ENCODE measurements at regions of chr9 and their contacts with region 1.

Region 1: DNA sequence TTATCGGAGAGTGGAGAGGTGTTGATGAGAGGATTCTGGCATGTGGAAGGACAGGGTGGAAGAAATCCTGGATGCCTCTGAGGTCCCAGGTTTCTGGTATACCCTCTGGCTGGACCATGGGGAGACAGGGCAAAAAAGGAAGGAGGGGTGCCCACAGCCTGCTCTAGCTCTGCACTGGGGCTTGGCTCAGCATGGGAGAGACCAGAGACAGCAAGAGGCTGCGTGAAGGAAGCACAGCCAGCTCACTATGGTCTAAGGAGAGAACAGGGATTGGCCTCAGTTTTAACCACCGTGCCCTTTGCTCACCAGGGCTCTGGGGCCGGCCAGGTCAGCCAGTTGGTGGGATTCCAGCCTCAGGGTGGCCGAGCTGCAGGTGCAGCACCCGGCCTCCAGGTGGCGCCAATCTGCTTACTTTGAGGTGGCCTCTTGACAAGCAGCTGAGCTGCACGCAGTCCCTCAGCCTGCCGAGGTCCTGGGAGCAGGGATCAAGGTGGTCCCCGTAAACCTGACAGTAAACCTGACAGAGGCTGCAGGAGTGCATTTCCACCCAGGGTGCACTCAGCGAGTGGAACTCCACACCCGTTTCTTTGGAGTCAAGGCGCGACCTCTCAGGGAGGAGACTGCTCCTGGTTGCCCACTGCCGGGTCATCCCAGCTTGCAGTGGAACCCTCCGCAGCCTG is 25.0 kb upstream of the SPTLC1 start:
- DNase-seq: peak; percentile 52 to 85
- H3K4me3 ChIP-seq: no peak overlapping the region; the same call in 1 of the 2 replicates
- H3K27ac ChIP-seq: no peak overlapping the region
- H3K4me1 ChIP-seq: peaks cover 9% of the 10 kb centered on the region; the same call in 1 of the 2 replicates
- H3K27me3 ChIP-seq: peaks cover 14% of the 10 kb centered on the region; the same call in 1 of the 2 replicates
- CTCF ChIP-seq: peak; percentile 95

Region 2: DNA sequence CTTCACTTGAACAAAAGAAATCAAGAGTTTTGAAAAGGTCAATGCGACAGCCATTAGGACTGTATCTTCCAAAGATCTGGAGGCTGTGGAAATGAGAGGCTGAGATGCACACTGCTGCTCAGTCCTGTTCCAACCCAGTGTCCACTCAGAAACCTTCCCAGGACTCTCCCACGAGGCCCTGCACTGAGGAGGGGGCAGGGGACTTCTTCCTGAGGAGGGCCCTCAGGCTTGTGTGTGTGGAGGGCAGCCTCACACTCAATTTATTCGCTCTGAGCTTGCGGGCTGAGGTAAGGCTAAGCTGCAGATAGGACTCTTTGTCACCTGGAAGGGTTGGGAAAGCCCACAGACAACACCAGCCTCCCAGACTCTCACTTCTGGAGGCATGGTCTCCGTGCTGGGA is 120.6 kb before region 1 on chr9:
- CTCF ChIA-PET with region 1: no interaction called
- POLR2A ChIA-PET with region 1: no interaction called
- intact Hi-C with region 1: no loop called
- DNase-seq: no peak
- H3K4me3 ChIP-seq: no peak overlapping the region
- H3K27ac ChIP-seq: no peak overlapping the region
- H3K4me1 ChIP-seq: no peaks in the 10 kb centered on the region
- H3K27me3 ChIP-seq: peaks cover 35% of the 10 kb centered on the region; the same call in 1 of the 2 replicates
- CTCF ChIP-seq: no peak

Region 3: GRCh38 chr9:92160786-92161185 is 20.6 kb after region 1 on chr9:
- CTCF ChIA-PET with region 1: no interaction called
- POLR2A ChIA-PET with region 1: no interaction called
- intact Hi-C with region 1: no loop called
- DNase-seq: no peak
- H3K4me3 ChIP-seq: no peak overlapping the region
- H3K27ac ChIP-seq: no peak overlapping the region
- H3K4me1 ChIP-seq: no peaks in the 10 kb centered on the region
- H3K27me3 ChIP-seq: no peaks in the 10 kb centered on the region
- CTCF ChIP-seq: no peak

Region 4: DNA sequence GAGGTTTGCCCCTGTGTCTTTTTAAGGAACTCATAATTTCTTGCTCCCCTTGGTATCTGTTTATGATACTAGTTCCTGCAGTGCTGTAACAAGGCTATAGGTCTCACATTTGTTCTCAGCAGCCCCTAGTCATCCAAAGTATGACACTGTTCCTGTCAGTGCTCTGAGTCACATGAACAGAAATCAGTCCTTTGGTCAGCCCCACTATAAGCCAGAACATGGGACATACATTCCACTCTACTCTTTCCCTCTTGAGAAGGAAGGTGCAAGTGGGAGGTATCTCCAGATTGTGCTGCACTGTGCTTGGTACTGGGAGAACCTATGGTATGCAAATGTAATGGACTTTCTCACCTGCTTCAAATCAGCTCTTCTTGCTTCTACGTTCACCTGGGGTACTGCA is 66.3 kb after region 1 on chr9:
- CTCF ChIA-PET with region 1: interaction called, 3 read pairs
- POLR2A ChIA-PET with region 1: no interaction called
- intact Hi-C with region 1: loop called (anchors 5 kb)
- DNase-seq: no peak
- H3K4me3 ChIP-seq: no peak overlapping the region
- H3K27ac ChIP-seq: peak overlapping the region; percentile 9; the same call in 1 of the 2 replicates
- H3K4me1 ChIP-seq: no peaks in the 10 kb centered on the region
- H3K27me3 ChIP-seq: no peaks in the 10 kb centered on the region
- CTCF ChIP-seq: no peak

Region 5: GRCh38 chr9:92242260-92243136 is 102.3 kb after region 1 on chr9:
- CTCF ChIA-PET with region 1: interaction called, 4 read pairs
- POLR2A ChIA-PET with region 1: no interaction called
- intact Hi-C with region 1: loop called (anchors 1 kb)
- DNase-seq: no peak
- H3K4me3 ChIP-seq: no peak overlapping the region
- H3K27ac ChIP-seq: no peak overlapping the region
- H3K4me1 ChIP-seq: no peaks in the 10 kb centered on the region
- H3K27me3 ChIP-seq: no peaks in the 10 kb centered on the region
- CTCF ChIP-seq: peak; percentile 26; the same call in 1 of the 2 replicates

Region 6: GRCh38 chr9:92293452-92294296 is 153.5 kb after region 1 on chr9 and contains the start of gene IARS1:
- CTCF ChIA-PET with region 1: no interaction called
- POLR2A ChIA-PET with region 1: no interaction called
- intact Hi-C with region 1: loop called (anchors 2 kb)
- DNase-seq: peak; percentile 94 to 100
- H3K4me3 ChIP-seq: peak within 1 kb of the TSS; percentile 95
- H3K27ac ChIP-seq: peak within 1 kb of the TSS; percentile 96
- H3K4me1 ChIP-seq: peaks cover 22% of the 10 kb centered on the region
- H3K27me3 ChIP-seq: no peaks in the 10 kb centered on the region
- CTCF ChIP-seq: no peak; the same call in 1 of the 2 replicates
- total RNA-seq, gene IARS1: 232 and 246 TPM in 2 replicates

Region 7: DNA sequence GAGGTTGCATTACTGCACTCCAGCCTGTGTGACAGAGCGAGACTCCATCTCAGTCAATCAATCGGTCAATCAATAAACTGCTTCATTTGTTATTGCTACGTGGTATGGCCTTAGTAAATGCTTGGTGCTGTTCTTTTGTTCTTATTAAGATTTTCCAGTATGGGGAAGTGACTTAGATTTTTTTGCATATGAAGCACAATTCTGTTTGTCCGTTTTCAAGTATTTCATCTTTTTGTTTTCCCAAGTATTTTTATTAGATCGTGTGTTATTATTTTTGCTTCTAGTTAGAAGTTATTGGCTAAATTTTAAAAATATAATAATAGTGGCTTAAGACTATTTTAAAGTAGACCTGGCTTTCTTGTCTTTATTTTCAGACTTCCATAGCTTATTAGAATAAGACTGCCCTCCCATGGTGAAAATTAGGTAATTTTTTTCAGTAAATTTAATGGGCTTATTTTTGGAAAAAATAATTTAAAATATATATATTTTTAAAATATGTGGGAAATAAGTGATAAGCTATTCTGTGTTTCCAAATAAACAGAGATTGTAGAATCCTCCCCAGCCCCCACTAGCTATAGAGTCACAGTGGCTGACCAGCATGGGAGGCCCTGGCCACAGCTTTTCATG is 298.8 kb after region 1 on chr9:
- CTCF ChIA-PET with region 1: no interaction called
- POLR2A ChIA-PET with region 1: no interaction called
- intact Hi-C with region 1: loop called (anchors 5 kb)
- DNase-seq: no peak
- H3K4me3 ChIP-seq: no peak overlapping the region
- H3K27ac ChIP-seq: no peak overlapping the region
- H3K4me1 ChIP-seq: no peaks in the 10 kb centered on the region
- H3K27me3 ChIP-seq: no peaks in the 10 kb centered on the region
- CTCF ChIP-seq: peak; percentile 34; the same call in 1 of the 2 replicates

Region 8: GRCh38 chr9:92634712-92635605 is 494.7 kb after region 1 on chr9:
- CTCF ChIA-PET with region 1: interaction called, 3 read pairs
- POLR2A ChIA-PET with region 1: no interaction called
- intact Hi-C with region 1: loop called (anchors 1 kb)
- DNase-seq: peak in 1 of 2 experiments; percentile 64
- H3K4me3 ChIP-seq: no peak overlapping the region
- H3K27ac ChIP-seq: no peak overlapping the region
- H3K4me1 ChIP-seq: no peaks in the 10 kb centered on the region
- H3K27me3 ChIP-seq: no peaks in the 10 kb centered on the region
- CTCF ChIP-seq: peak; percentile 87